Prostate gland (tissue), 2 donors: ENCODE measurements at regions of chr1 and their contacts with region 1.

Region 1: GRCh38 chr1:12619792-12620487 is 1.9 kb upstream of the DHRS3 start:
- DNase-seq: peak; percentile 91
- H3K4me3 ChIP-seq: peak overlapping the region; percentile 85 to 93
- H3K27ac ChIP-seq: peak overlapping the region; percentile 98
- H3K4me1 ChIP-seq: peaks cover 23% of the 10 kb centered on the region
- H3K27me3 ChIP-seq: no peaks in the 10 kb centered on the region
- CTCF ChIP-seq: peak; percentile 95 to 99 (median 96)
- POLR2A ChIP-seq: peak; percentile 32

Region 2: GRCh38 chr1:12314333-12314903 is 305.5 kb before region 1 on chr1:
- intact Hi-C with region 1: loop called (anchors 2 kb)
- DNase-seq: no peak
- H3K4me3 ChIP-seq: no peak overlapping the region
- H3K27ac ChIP-seq: no peak overlapping the region
- H3K4me1 ChIP-seq: peaks cover 10% of the 10 kb centered on the region
- H3K27me3 ChIP-seq: no peaks in the 10 kb centered on the region
- CTCF ChIP-seq: peak in 3 of 4 experiments; percentile 28 to 66 (median 63)
- POLR2A ChIP-seq: no peak

Region 3: DNA sequence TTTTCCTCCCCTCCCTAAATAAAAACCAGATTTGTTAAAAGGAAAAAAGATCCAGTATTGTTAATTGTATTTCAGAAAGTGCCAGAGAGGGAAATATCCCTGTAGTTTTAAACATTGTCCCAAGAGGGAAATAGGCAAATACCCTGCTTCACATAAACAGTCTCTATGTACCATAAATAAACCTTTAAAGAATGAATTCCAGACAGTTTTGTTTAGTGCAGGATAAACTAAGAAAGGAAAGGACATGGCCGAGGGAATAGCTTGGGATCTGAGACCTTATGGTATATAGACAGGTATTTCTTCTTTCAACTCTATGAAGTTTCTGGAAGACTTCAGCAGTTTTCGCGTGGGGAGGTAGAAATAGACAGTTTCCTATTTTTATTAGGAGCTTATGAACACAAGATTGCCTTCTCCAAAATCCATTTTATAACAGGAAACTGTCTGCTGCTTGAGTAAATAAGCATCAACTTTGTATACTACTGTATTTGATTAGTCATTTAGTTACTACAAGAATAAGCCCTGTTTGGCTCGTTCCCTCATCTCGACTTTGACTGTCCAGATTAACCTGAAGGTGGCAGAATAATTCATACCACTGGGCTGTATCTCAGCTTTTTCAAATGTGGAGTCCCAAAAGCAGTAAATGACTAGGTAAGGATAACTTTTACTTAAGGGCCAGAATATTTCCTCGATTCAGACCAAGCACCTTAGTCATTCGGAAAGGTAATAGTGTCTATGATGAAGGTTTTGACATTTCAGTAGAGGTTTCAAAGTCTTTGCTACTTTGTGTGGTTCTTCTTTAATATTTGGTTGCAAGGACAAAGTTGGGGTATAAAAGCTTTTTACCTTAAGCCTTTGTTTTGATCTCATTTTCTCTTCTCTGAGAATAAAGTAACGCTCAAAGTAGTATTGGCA is 212.6 kb before region 1 on chr1:
- intact Hi-C with region 1: loop called (anchors 2 kb)
- DNase-seq: peak; percentile 71
- H3K4me3 ChIP-seq: no peak overlapping the region
- H3K27ac ChIP-seq: peak overlapping the region; percentile 63 to 74
- H3K4me1 ChIP-seq: peaks cover 12% of the 10 kb centered on the region
- H3K27me3 ChIP-seq: no peaks in the 10 kb centered on the region
- CTCF ChIP-seq: peak in 3 of 4 experiments; percentile 58 to 76 (median 72)
- POLR2A ChIP-seq: no peak

Region 4: GRCh38 chr1:12448746-12449177 is 171.2 kb before region 1 on chr1:
- intact Hi-C with region 1: loop called (anchors 2 kb)
- DNase-seq: no peak
- H3K4me3 ChIP-seq: no peak overlapping the region
- H3K27ac ChIP-seq: peak overlapping the region; percentile 78 to 81
- H3K4me1 ChIP-seq: peaks cover 47% of the 10 kb centered on the region
- H3K27me3 ChIP-seq: no peaks in the 10 kb centered on the region
- CTCF ChIP-seq: no peak
- POLR2A ChIP-seq: no peak

Region 5: GRCh38 chr1:12539705-12540579 is 80.0 kb before region 1 on chr1:
- intact Hi-C with region 1: loop called (anchors 1 kb)
- DNase-seq: no peak
- H3K4me3 ChIP-seq: no peak overlapping the region
- H3K27ac ChIP-seq: peak overlapping the region; percentile 36 to 67
- H3K4me1 ChIP-seq: no peaks in the 10 kb centered on the region
- H3K27me3 ChIP-seq: no peaks in the 10 kb centered on the region
- CTCF ChIP-seq: no peak
- POLR2A ChIP-seq: no peak

Region 6: DNA sequence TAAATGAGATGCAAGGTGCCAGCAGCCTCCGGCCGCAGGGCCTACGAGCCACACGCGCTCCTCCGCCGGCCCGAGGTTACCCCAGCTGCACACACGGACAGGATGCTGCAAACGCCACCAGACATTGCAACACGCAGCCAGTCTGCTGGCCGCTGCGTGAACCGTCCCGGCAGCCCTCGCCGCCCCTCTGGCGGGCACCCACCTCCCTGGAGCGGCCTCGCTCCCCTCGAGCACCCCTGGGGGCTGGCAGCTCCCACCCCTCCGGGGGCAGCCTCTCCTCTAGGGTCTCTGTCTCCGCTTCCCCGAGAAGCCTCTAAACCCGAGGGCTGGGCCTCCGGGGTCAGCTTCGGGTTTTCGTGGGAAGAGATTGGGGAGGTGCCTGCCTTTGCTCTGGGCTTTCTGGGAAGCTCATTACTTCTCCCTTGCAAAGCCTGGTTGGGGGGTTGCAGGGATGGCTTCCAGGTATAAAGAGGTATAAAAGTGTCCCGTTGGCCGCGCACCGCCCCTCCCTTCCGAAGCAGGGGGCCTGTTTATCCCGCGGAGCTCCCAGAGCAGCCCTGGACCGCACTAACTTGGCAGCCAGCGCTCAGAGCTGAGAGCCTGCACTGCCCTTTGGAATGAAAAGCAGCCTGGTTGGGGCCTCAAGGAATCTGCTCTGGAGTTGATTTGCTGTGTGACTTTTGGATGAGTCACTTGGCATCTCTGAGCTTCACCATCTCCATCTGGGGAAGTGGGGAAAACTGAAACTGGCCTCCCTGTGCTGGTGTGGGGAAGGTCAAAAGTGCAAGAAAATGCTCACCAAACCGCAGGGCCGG is 23.7 kb before region 1 on chr1:
- intact Hi-C with region 1: loop called (anchors 2 kb)
- DNase-seq: peak; percentile 58
- H3K4me3 ChIP-seq: peak overlapping the region; percentile 17 to 32
- H3K27ac ChIP-seq: peak overlapping the region; percentile 89 to 90
- H3K4me1 ChIP-seq: peaks cover 64% of the 10 kb centered on the region
- H3K27me3 ChIP-seq: no peaks in the 10 kb centered on the region
- CTCF ChIP-seq: no peak
- POLR2A ChIP-seq: peak; percentile 68

Region 7: GRCh38 chr1:12658531-12659453 is 38.9 kb after region 1 on chr1:
- intact Hi-C with region 1: loop called (anchors 5 kb)
- DNase-seq: peak; percentile 70
- H3K4me3 ChIP-seq: no peak overlapping the region
- H3K27ac ChIP-seq: no peak overlapping the region
- H3K4me1 ChIP-seq: no peaks in the 10 kb centered on the region
- H3K27me3 ChIP-seq: no peaks in the 10 kb centered on the region
- CTCF ChIP-seq: peak; percentile 93 to 99 (median 94)
- POLR2A ChIP-seq: no peak

Region 8: GRCh38 chr1:12678820-12679219 is 58.9 kb after region 1 on chr1:
- intact Hi-C with region 1: no loop called
- DNase-seq: no peak
- H3K4me3 ChIP-seq: no peak overlapping the region
- H3K27ac ChIP-seq: no peak overlapping the region
- H3K4me1 ChIP-seq: no peaks in the 10 kb centered on the region
- H3K27me3 ChIP-seq: no peaks in the 10 kb centered on the region
- CTCF ChIP-seq: no peak
- POLR2A ChIP-seq: no peak

Region 9: GRCh38 chr1:12690156-12690555 is 70.2 kb after region 1 on chr1:
- intact Hi-C with region 1: no loop called
- DNase-seq: no peak
- H3K4me3 ChIP-seq: no peak overlapping the region
- H3K27ac ChIP-seq: no peak overlapping the region
- H3K4me1 ChIP-seq: no peaks in the 10 kb centered on the region
- H3K27me3 ChIP-seq: no peaks in the 10 kb centered on the region
- CTCF ChIP-seq: no peak
- POLR2A ChIP-seq: no peak